Activated T-helper 2 cell treated with anti-CD3 and anti-CD28 coated beads, Interferon-gamma antibody, Interleukin-2, Interleukin-4, amounts not matched to agents 10 μg/mL and 5 μg/mL and 100 μg/mL, durations not matched to agents 14 hours and 24 hours and 36 hours (primary cell): ENCODE measurements at regions of chr12 and their contacts with region 1.

Region 1: DNA sequence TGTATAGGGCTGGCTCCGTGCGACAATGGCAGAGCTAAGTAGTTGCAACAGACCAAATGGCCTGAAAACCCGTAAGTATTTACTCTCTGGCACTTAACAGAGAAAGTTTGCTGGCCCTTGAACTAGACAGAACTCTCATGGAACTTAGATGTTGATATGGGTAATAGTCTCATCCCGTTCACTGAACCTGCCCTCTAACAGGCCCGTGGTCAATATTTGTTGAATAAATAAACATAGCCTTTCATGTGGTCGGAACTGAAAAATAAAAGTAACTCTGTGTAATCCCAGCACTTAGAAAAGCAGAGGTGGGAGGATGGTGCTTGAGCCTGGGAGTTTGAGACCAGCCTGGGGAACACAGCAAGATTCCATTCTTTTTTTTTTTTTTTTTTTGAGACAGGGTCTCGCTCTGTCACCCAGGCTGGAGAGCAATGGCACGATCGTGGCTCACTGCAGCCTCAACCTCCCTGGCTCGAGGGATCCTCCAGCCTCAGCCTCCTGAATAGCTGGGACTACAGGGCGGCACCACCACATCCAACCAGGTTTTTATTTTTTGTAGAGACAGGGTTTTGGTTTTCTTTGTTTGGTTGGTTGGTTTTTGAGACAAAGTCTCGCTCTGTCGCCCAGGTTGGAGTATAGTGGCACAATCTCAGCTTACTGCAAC is 29.7 kb downstream of the KDM2B start:
- DNase-seq: no peak
- H3K4me3 Mint-ChIP-seq: no peak overlapping the region
- H3K27ac Mint-ChIP-seq: no peak overlapping the region
- H3K4me1 Mint-ChIP-seq: peaks cover 2% of the 10 kb centered on the region
- H3K27me3 Mint-ChIP-seq: no peaks in the 10 kb centered on the region

Region 2: GRCh38 chr12:121423682-121424623 is 127.2 kb before region 1 on chr12:
- intact Hi-C with region 1: no loop called
- DNase-seq: no peak
- H3K4me3 Mint-ChIP-seq: no peak overlapping the region
- H3K27ac Mint-ChIP-seq: no peak overlapping the region
- H3K4me1 Mint-ChIP-seq: no peaks in the 10 kb centered on the region
- H3K27me3 Mint-ChIP-seq: no peaks in the 10 kb centered on the region

Region 3: DNA sequence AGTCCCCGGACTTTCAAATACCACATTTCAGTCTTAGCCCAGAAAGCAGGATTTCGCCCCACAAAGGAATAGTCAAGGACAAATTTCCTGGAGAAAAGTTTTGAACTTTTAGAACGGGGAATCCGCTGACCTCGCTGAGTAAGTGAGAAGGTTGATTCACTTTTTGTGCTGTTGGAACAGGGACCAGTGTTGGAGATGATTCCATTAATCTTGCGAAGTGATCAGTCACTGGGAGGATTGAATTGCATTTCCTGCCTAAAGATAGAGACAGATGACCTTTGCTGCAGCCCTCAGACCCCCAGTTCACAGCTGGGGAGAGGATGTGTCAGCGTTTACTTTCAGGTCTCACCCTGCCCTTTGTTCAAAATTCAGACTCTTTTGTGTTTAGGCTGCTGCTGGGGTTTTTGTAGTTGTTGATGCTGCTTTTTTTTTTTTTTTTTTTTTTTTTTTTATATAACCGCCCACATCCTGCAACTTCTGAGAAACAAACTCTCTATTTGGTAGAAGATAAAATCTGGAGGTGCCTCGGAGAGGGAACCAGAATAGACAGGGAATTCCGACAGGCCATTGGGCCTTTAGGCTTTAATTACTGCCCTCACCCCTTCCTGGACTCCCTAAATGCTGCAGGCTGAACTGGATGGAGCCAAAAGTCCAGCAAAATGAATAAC is 39.5 kb after region 1 on chr12:
- intact Hi-C with region 1: no loop called
- DNase-seq: peak; percentile 68
- H3K4me3 Mint-ChIP-seq: peak overlapping the region; percentile 76
- H3K27ac Mint-ChIP-seq: peak overlapping the region; percentile 97
- H3K4me1 Mint-ChIP-seq: peaks cover 31% of the 10 kb centered on the region
- H3K27me3 Mint-ChIP-seq: no peaks in the 10 kb centered on the region

Region 4: GRCh38 chr12:121668750-121669520 is 117.8 kb after region 1 on chr12:
- intact Hi-C with region 1: loop called (anchors 5 kb)
- DNase-seq: peak; percentile 31
- H3K4me3 Mint-ChIP-seq: no peak overlapping the region
- H3K27ac Mint-ChIP-seq: peak overlapping the region; percentile 49
- H3K4me1 Mint-ChIP-seq: peaks cover 34% of the 10 kb centered on the region
- H3K27me3 Mint-ChIP-seq: no peaks in the 10 kb centered on the region

Region 5: GRCh38 chr12:121678716-121679580 is 127.8 kb after region 1 on chr12:
- intact Hi-C with region 1: loop called (anchors 1 kb)
- DNase-seq: no peak
- H3K4me3 Mint-ChIP-seq: no peak overlapping the region
- H3K27ac Mint-ChIP-seq: no peak overlapping the region
- H3K4me1 Mint-ChIP-seq: peaks cover 2% of the 10 kb centered on the region
- H3K27me3 Mint-ChIP-seq: no peaks in the 10 kb centered on the region